HepG2 (cell line): ENCODE measurements at regions of chrX and their contacts with region 1.

Region 1: GRCh38 chrX:44872817-44873414 is at the start of gene KDM6A:
- DNase-seq: peak; percentile 91
- ATAC-seq: peak; percentile 97
- H3K4me3 ChIP-seq: peak within 1 kb of the TSS; percentile 81 to 85 (median 85)
- H3K27ac ChIP-seq: peak within 1 kb of the TSS; percentile 94
- H3K4me1 ChIP-seq: peaks cover 2% of the 10 kb centered on the region; the same call in 1 of the 2 replicates
- H3K27me3 ChIP-seq: no peaks in the 10 kb centered on the region; a peak in 1 of 5 replicates
- CTCF ChIP-seq: no peak
- EP300 ChIP-seq: no peak
- POLR2A ChIP-seq: peak in 1 of 2 experiments; percentile 58; a peak in 1 of 4 replicates
- RAD21 ChIP-seq: no peak
- total RNA-seq, gene KDM6A: 18.2 and 23.1 TPM in 2 replicates

Region 2: GRCh38 chrX:44542567-44543325 is 330.2 kb before region 1 on chrX and contains the start of gene FUNDC1:
- CTCF ChIA-PET with region 1: no interaction called
- POLR2A ChIA-PET with region 1: interaction called, 5 read pairs
- in situ Hi-C with region 1: no loop called
- intact Hi-C with region 1: loop called (anchors 5 kb)
- DNase-seq: peak; percentile 90
- ATAC-seq: peak; percentile 98
- H3K4me3 ChIP-seq: peak within 1 kb of the TSS; percentile 75 to 82 (median 78)
- H3K27ac ChIP-seq: peak within 1 kb of the TSS; percentile 72
- H3K4me1 ChIP-seq: peaks cover 12% of the 10 kb centered on the region; the same call in 1 of the 2 replicates
- H3K27me3 ChIP-seq: no peaks in the 10 kb centered on the region
- CTCF ChIP-seq: no peak
- EP300 ChIP-seq: no peak
- POLR2A ChIP-seq: peak; percentile 53 to 56; a peak in 3 of 4 replicates
- RAD21 ChIP-seq: no peak
- total RNA-seq, gene FUNDC1: 13.9 and 20.3 TPM in 2 replicates

Region 3: GRCh38 chrX:44914532-44915198 is 41.7 kb after region 1 on chrX:
- CTCF ChIA-PET with region 1: no interaction called
- POLR2A ChIA-PET with region 1: interaction called, 13 read pairs
- in situ Hi-C with region 1: no loop called
- intact Hi-C with region 1: no loop called
- DNase-seq: no peak
- ATAC-seq: peak; percentile 30
- H3K4me3 ChIP-seq: peak overlapping the region; percentile 24 to 55 (median 48); a peak in 5 of 6 replicates
- H3K27ac ChIP-seq: peak overlapping the region; percentile 87
- H3K4me1 ChIP-seq: peaks cover 69% of the 10 kb centered on the region
- H3K27me3 ChIP-seq: no peaks in the 10 kb centered on the region
- CTCF ChIP-seq: no peak
- EP300 ChIP-seq: no peak
- POLR2A ChIP-seq: no peak
- RAD21 ChIP-seq: no peak

Region 4: GRCh38 chrX:44945736-44946135 is 72.8 kb after region 1 on chrX:
- CTCF ChIA-PET with region 1: no interaction called
- POLR2A ChIA-PET with region 1: no interaction called
- in situ Hi-C with region 1: no loop called
- intact Hi-C with region 1: loop called (anchors 10 kb)
- DNase-seq: peak; percentile 10
- ATAC-seq: 0 out of 3 replicates have a peak, but pooled peaks have one; percentile 38
- H3K4me3 ChIP-seq: no peak overlapping the region
- H3K27ac ChIP-seq: no peak overlapping the region
- H3K4me1 ChIP-seq: peaks cover 12% of the 10 kb centered on the region
- H3K27me3 ChIP-seq: no peaks in the 10 kb centered on the region
- CTCF ChIP-seq: peak; percentile 38; the same call in 1 of the 2 replicates
- EP300 ChIP-seq: no peak
- POLR2A ChIP-seq: no peak
- RAD21 ChIP-seq: no peak